MCF 10A (cell line): ENCODE measurements at regions of chr1 and their contacts with region 1.

Region 1: DNA sequence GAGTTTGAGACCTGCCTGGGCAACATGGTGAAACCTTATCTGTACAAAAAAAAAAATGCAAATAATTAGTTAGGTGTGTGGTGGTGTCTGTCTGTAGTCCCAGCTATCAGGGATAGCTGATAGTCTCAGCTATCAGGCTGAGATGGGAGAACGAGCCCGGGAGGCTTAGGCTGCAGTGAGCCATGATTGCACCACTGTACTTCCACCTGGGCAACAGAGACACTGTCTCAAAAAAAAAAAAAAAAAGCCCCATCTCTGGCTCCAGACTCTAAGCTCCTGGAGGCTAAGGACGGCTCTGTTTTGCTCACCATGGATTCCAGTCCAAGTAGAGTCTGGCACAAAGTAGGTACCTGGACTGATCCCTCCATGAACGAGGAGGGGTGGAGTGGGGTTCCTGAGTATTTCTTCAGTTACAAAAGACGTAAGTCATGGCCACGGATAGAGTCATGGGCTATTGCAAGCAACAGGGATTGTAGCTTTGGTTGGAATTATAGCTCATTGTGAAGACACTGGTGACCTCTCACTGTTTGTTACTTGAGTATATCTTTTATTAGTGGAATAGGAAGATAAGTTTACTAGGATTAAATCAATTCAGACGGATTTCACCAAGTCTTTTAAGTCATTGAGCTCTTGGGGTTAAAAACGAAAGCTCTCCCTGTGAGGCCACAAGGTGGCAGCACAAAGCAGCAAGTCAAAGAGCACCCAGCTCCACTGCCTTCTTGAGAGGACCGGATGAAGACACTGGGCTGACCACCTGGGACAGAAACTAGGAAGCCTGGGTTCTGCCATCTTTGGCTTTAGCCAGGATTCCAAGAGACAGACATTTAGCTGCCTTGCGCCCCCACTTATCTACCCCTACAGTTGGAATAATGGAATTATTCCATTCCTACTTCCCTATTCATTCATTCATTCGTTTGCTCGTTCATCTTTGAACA is 35.6 kb upstream of the TMEM61 start:
- DNase-seq: peak; percentile 83
- H3K4me3 Mint-ChIP-seq: peak overlapping the region; percentile 44
- H3K27ac Mint-ChIP-seq: peak overlapping the region; percentile 25
- H3K4me1 Mint-ChIP-seq: peaks cover 14% of the 10 kb centered on the region
- H3K27me3 Mint-ChIP-seq: no peaks in the 10 kb centered on the region
- CTCF ChIP-seq: peak; percentile 68

Region 2: DNA sequence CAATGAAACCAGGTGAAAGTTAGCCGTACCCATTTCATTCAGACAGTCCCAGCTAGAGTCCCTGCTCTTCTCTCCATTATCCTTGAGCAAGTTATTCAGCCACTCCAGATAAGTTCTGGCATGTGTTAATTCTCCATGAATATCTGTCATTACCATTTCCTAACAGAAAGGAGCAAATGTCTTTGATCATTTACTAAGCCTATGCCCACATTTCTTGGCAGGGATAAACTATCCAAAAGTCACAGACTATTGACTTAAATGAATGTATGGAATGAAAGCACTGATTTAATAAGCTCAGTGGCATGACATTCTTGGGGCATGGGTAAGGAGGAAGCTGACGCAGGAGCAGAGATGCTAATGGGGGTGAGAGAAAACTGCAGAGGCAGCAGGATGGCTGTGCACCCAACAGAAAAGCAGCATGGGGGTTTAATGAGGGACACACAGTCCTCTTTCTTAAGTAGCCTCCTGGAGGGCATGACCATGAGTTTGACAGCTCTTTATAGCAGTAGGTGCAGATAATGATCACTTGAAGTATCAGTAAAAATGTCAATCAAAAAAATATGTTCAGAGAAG is 40.3 kb before region 1 on chr1:
- CTCF ChIA-PET with region 1: interaction called, 15 read pairs
- POLR2A ChIA-PET with region 1: no interaction called
- intact Hi-C with region 1: no loop called
- DNase-seq: peak; percentile 35
- H3K4me3 Mint-ChIP-seq: no peak overlapping the region
- H3K27ac Mint-ChIP-seq: no peak overlapping the region
- H3K4me1 Mint-ChIP-seq: peaks cover 7% of the 10 kb centered on the region
- H3K27me3 Mint-ChIP-seq: no peaks in the 10 kb centered on the region
- CTCF ChIP-seq: no peak

Region 3: DNA sequence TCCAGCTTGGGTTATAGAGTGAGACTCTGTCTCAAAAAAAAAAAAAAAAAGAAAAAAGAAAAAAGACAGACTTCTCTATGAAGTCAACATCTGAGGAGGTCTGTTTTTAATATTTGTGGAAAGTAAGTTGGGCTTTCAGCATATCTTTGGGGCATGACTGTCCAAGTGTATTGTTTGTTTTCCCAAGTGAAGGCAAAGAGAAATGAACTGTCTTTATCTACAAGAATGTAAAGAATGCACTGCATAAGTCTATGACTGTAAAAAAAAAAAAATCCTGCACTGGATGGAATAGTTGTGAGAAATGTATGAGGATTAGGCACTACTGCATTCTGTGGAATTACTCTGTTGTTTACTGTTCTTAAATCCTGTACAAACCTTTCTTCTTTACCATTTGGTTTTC is 10.0 kb before region 1 on chr1:
- CTCF ChIA-PET with region 1: interaction called, 39 read pairs
- POLR2A ChIA-PET with region 1: interaction called, 5 read pairs
- intact Hi-C with region 1: no loop called
- DNase-seq: no peak
- H3K4me3 Mint-ChIP-seq: no peak overlapping the region
- H3K27ac Mint-ChIP-seq: no peak overlapping the region
- H3K4me1 Mint-ChIP-seq: peaks cover 20% of the 10 kb centered on the region
- H3K27me3 Mint-ChIP-seq: no peaks in the 10 kb centered on the region
- CTCF ChIP-seq: no peak

Region 4: DNA sequence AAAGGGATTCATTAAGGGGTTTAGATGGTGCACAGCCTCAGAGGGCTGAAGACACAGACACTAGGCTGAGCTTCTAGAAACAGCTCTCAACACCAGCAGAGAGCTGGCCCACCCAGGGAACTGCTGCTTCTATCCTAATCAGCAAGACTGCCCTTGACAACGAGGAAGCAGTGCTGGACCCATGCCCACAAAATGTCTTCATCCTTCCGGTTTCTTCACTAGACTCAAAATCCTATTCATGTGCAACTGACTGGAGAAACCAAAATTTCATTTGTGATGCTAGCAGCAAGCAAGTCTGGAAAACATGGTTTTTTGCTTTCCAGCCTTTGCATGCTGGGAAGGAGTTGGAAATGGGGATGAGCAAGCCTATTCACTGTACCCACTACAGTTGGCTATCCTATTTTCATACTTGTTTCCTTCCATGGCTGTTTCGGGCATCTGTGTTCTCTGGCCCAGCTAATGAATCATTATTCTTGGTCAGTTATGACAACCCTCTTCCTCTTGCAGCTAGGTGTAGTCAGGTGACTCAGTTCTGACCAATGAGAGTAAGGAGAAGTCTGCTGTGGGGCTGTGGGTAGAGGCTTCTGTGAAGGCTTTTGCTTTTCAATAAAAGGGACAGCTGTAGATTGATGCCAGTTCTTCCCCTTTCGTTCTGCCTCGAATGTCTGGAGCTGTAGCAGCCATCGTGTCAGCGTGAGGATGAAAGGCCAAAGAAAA is 20.9 kb after region 1 on chr1:
- CTCF ChIA-PET with region 1: interaction called, 17 read pairs
- POLR2A ChIA-PET with region 1: interaction called, 4 read pairs
- intact Hi-C with region 1: no loop called
- DNase-seq: peak; percentile 82
- H3K4me3 Mint-ChIP-seq: no peak overlapping the region
- H3K27ac Mint-ChIP-seq: no peak overlapping the region
- H3K4me1 Mint-ChIP-seq: peaks cover 30% of the 10 kb centered on the region
- H3K27me3 Mint-ChIP-seq: no peaks in the 10 kb centered on the region
- CTCF ChIP-seq: no peak

Region 5: DNA sequence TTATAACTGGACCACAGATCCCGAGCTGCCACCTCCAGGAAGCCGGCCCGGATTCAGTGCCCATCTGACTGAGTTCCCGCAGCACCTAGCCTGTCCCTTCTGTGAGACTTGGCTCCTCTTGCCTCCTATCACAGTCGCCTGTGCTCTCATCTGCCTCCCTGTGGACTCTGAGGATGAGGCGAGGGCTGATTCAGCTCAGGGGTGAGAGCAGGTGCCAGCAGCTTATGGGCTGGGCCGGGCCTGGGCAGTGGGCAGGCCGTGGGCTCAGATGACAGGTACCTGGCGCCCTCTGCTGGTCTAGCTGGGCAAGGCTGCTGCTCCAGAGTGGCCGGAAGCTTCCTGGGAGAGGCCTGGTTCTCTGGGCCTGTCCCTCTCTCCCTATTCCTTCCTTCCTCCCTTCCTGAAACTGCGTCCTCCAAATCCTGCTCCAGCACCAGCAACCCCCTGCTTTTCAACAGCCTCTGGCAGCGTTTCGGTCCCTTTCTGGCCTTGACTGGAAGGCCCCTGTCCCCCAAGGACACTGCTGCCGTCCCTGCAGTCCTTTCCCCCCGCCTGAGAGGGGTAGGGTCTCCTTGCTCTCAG is 77.2 kb after region 1 on chr1:
- CTCF ChIA-PET with region 1: interaction called, 81 read pairs
- POLR2A ChIA-PET with region 1: interaction called, 5 read pairs
- intact Hi-C with region 1: loop called (anchors 1 kb)
- DNase-seq: peak; percentile 93
- H3K4me3 Mint-ChIP-seq: no peak overlapping the region
- H3K27ac Mint-ChIP-seq: peak overlapping the region; percentile 85
- H3K4me1 Mint-ChIP-seq: peaks cover 27% of the 10 kb centered on the region
- H3K27me3 Mint-ChIP-seq: peaks cover 3% of the 10 kb centered on the region
- CTCF ChIP-seq: peak; percentile 92

Region 6: GRCh38 chr1:55140546-55140983 is 195.7 kb after region 1 on chr1:
- CTCF ChIA-PET with region 1: no interaction called
- POLR2A ChIA-PET with region 1: no interaction called
- intact Hi-C with region 1: no loop called
- DNase-seq: peak; percentile 86
- H3K4me3 Mint-ChIP-seq: no peak overlapping the region
- H3K27ac Mint-ChIP-seq: peak overlapping the region; percentile 46
- H3K4me1 Mint-ChIP-seq: peaks cover 5% of the 10 kb centered on the region
- H3K27me3 Mint-ChIP-seq: no peaks in the 10 kb centered on the region
- CTCF ChIP-seq: peak; percentile 66

Region 7: GRCh38 chr1:55204997-55205396 is 260.1 kb after region 1 on chr1:
- CTCF ChIA-PET with region 1: no interaction called
- POLR2A ChIA-PET with region 1: no interaction called
- intact Hi-C with region 1: no loop called
- DNase-seq: peak; percentile 44
- H3K4me3 Mint-ChIP-seq: no peak overlapping the region
- H3K27ac Mint-ChIP-seq: no peak overlapping the region
- H3K4me1 Mint-ChIP-seq: peaks cover 19% of the 10 kb centered on the region
- H3K27me3 Mint-ChIP-seq: no peaks in the 10 kb centered on the region
- CTCF ChIP-seq: no peak